ENCODE measurements at regions of chr18 and their contacts with region 1.

Region 1: GRCh38 chr18:50218432-50219197 is 23.7 kb upstream of the MYO5B start:
- DNase-seq: peak; percentile 57
- H3K4me3 Mint-ChIP-seq: no peak overlapping the region
- H3K27ac Mint-ChIP-seq: no peak overlapping the region
- H3K4me1 Mint-ChIP-seq: peaks cover 43% of the 10 kb centered on the region
- H3K27me3 Mint-ChIP-seq: peaks cover 44% of the 10 kb centered on the region
- CTCF ChIP-seq: peak; percentile 64

Region 2: DNA sequence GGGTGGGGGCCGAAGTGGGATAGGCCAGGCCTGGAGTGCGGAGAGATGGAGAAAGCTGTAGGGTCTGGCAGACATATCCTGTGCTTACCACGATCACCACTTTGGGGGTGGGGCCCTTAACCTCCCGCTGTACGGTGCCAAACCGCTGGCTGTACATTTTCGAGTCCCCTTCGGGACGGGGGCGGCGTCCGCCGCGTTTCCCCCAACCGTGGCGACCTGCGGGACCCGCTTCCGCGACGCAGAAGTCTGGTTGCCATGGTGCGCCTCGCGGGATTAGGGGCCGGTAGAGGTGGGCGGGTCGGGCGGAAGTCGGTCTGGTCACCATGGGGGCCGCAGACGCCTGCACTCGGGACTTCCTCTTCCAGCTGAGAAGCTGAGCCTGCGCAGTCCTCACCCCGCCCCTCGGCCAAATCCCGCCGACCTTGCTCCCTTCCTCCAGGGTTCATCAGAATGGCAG is 47.7 kb after region 1 on chr18 and contains the start of gene CFAP53:
- CTCF ChIA-PET with region 1: interaction called, 5 read pairs
- intact Hi-C with region 1: loop called (anchors 5 kb)
- DNase-seq: peak; percentile 92
- H3K4me3 Mint-ChIP-seq: peak within 1 kb of the TSS; percentile 89
- H3K27ac Mint-ChIP-seq: peak within 1 kb of the TSS; percentile 80
- H3K4me1 Mint-ChIP-seq: peaks cover 20% of the 10 kb centered on the region
- H3K27me3 Mint-ChIP-seq: no peaks in the 10 kb centered on the region
- CTCF ChIP-seq: no peak
- total RNA-seq, gene CFAP53: 0.94 and 0.98 TPM in 2 replicates

Region 3: GRCh38 chr18:50429207-50429948 is 210.8 kb after region 1 on chr18:
- CTCF ChIA-PET with region 1: interaction called, 9 read pairs
- intact Hi-C with region 1: loop called (anchors 1 kb)
- DNase-seq: peak; percentile 30
- H3K4me3 Mint-ChIP-seq: no peak overlapping the region
- H3K27ac Mint-ChIP-seq: no peak overlapping the region
- H3K4me1 Mint-ChIP-seq: no peaks in the 10 kb centered on the region
- H3K27me3 Mint-ChIP-seq: peaks cover 41% of the 10 kb centered on the region
- CTCF ChIP-seq: peak; percentile 54

Measured in Calu3 (cell line).